Mammary epithelial cell (primary cell): ENCODE measurements at regions of chr4 and their contacts with region 1.

Region 1: DNA sequence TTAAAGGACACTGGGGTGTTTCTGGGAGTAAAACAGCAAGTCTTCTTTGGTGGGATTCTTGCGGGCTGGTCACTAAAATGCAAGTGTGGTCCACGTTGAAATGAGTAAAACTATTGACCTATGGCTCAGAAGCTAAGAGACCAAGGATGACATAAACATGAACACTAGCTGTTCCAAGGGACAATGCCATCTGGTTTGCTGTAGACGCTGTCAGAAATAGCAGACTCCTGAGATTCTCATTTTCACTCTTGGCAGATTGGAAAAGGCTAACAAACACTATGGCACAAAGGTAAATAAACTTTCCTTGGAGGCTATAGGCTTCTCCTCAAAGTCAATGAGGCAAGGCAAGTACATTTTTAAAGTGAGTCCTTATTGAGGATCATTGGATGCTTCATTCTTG is 343.6 kb downstream of the KCNIP4 start:
- DNase-seq: no peak
- H3K4me3 ChIP-seq: no peak overlapping the region
- H3K27ac ChIP-seq: no peak overlapping the region
- H3K4me1 ChIP-seq: no peaks in the 10 kb centered on the region
- H3K27me3 ChIP-seq: no peaks in the 10 kb centered on the region
- CTCF ChIP-seq: no peak

Region 2: DNA sequence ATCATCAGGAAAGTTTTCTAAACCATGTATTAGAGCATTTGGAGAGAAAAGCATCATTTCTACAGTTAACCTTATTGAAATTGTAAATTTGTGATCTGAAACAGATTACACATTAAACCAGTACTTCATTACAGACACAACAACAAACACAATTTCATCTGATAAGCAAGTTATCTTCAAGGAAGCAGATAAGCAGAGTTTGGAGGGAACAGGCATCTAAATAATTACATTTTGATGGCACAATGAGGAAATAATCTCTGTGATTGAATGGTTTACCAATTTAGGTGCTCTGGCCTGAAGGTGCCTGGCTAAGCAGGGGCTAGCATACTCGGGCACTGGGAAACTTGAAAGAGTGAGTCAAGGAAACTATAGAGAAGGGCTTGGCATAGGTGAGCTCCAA is 285.0 kb before region 1 on chr4:
- CTCF ChIA-PET with region 1: no interaction called
- dilution Hi-C with region 1: no loop called
- in situ Hi-C with region 1: no loop called
- intact Hi-C with region 1: no loop called
- DNase-seq: no peak
- H3K4me3 ChIP-seq: no peak overlapping the region
- H3K27ac ChIP-seq: no peak overlapping the region
- H3K4me1 ChIP-seq: no peaks in the 10 kb centered on the region
- H3K27me3 ChIP-seq: no peaks in the 10 kb centered on the region
- CTCF ChIP-seq: no peak

Region 3: DNA sequence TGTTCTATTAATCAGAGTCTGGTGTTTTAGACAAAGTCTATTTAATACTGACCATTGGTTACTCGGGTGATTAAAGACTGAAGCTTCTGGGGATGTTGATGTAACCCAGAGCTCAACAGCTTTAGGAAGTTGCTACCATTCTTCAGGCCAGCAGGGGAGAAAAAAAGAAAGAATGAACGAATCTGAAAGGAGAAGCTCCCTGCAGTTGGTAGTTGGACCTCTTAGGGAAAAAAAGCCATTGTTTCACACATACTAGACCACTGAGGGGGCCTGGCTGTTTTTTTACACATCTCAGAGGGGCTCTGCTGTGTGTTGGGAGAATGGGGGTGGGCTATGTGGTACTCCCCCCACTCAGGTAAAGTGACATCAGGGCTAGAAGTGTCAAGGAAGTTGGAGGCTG is 35.4 kb before region 1 on chr4:
- CTCF ChIA-PET with region 1: no interaction called
- dilution Hi-C with region 1: loop called (anchors 5 kb)
- in situ Hi-C with region 1: no loop called
- intact Hi-C with region 1: no loop called
- DNase-seq: no peak
- H3K4me3 ChIP-seq: no peak overlapping the region
- H3K27ac ChIP-seq: no peak overlapping the region
- H3K4me1 ChIP-seq: no peaks in the 10 kb centered on the region
- H3K27me3 ChIP-seq: peaks cover 3% of the 10 kb centered on the region
- CTCF ChIP-seq: no peak

Region 4: GRCh38 chr4:22634541-22635181 is 1029.7 kb after region 1 on chr4:
- CTCF ChIA-PET with region 1: no interaction called
- dilution Hi-C with region 1: no loop called
- in situ Hi-C with region 1: no loop called
- intact Hi-C with region 1: no loop called
- DNase-seq: peak; percentile 35
- H3K4me3 ChIP-seq: no peak overlapping the region
- H3K27ac ChIP-seq: no peak overlapping the region
- H3K4me1 ChIP-seq: no peaks in the 10 kb centered on the region
- H3K27me3 ChIP-seq: no peaks in the 10 kb centered on the region
- CTCF ChIP-seq: no peak